Esophagus squamous epithelium (tissue), 5 donors: ENCODE measurements at regions of chr2 and their contacts with region 1.

Region 1: GRCh38 chr2:127197475-127198385 is 22.4 kb downstream of the CYP27C1 start:
- DNase-seq: no peak
- H3K4me3 ChIP-seq: no peak overlapping the region
- H3K27ac ChIP-seq: no peak overlapping the region
- H3K4me1 ChIP-seq: peaks cover 0 to 14% (median 0%) of the 10 kb centered on the region in 3 donors
- H3K27me3 ChIP-seq: no peaks in the 10 kb centered on the region
- CTCF ChIP-seq: peak in 5 of 6 experiments; percentile 46 to 75 (median 56)
- POLR2A ChIP-seq: no peak

Region 2: GRCh38 chr2:127261804-127262406 is 64.2 kb after region 1 on chr2:
- intact Hi-C with region 1: no loop called
- DNase-seq: no peak
- H3K4me3 ChIP-seq: no peak overlapping the region
- H3K27ac ChIP-seq: no peak overlapping the region
- H3K4me1 ChIP-seq: no peaks in the 10 kb centered on the region
- H3K27me3 ChIP-seq: no peaks in the 10 kb centered on the region
- CTCF ChIP-seq: no peak
- POLR2A ChIP-seq: no peak

Region 3: DNA sequence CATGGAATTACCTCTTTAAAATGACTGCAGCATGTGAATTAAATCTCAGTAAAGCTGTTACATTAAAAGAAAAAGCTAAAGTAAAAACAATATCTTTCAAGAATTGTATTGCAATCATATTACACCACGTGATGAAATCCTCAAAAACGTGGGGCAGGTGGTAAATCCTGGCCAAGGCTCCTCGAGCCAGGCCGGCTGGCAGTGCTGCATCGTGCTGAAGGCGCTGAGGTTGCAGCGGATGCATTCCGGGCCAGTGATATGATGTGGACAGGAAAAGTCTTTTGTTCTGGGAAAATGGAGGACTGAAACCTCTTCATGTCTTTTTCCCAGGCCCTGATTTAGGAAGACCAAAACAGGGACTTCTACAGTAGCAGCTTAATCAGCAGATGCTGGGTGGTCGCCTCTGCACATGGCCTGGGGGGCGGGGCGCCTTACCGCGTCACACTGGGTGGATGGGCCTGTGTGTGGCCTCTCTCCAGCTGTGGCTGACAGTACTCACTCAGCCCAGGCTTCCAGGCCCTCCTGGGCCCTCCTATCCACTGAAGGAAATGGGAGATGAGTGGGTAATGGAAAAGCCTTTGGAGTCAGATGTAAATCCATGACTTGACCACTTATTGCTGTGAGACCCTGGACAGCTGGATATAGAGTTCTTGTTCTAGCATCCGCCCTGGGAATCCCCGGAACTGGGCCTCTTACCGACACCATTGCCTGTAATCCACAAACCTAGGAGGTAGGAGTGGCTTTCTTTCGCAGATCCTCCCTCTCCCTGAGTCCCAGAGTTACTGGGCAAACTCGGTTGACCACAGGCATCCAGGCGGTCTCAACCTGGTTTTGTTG is 265.6 kb after region 1 on chr2:
- intact Hi-C with region 1: loop called (anchors 10 kb)
- DNase-seq: no peak
- H3K4me3 ChIP-seq: no peak overlapping the region
- H3K27ac ChIP-seq: no peak overlapping the region
- H3K4me1 ChIP-seq: peaks cover 0 to 5% (median 0%) of the 10 kb centered on the region in 3 donors
- H3K27me3 ChIP-seq: no peaks in the 10 kb centered on the region
- CTCF ChIP-seq: no peak
- POLR2A ChIP-seq: no peak